ENCODE measurements at regions of chr19 and their contacts with region 1.

Region 1: GRCh38 chr19:49817964-49818648 is at the start of gene MED25:
- DNase-seq: peak in 1 of 2 donors; percentile 92
- H3K4me3 ChIP-seq: peak within 1 kb of the TSS; percentile 61 to 85
- H3K27ac ChIP-seq: peak within 1 kb of the TSS; percentile 87
- H3K4me1 ChIP-seq: peaks cover 28% of the 10 kb centered on the region
- H3K27me3 ChIP-seq: no peaks in the 10 kb centered on the region
- CTCF ChIP-seq: peak in 2 of 3 experiments; percentile 46 to 54
- POLR2A ChIP-seq: peak; percentile 9 to 51
- total RNA-seq, gene MED25: 25.0 TPM

Region 2: GRCh38 chr19:49862376-49863253 is 44.5 kb after region 1 on chr19:
- intact Hi-C with region 1: loop called (anchors 5 kb)
- DNase-seq: no peak
- H3K4me3 ChIP-seq: no peak overlapping the region
- H3K27ac ChIP-seq: no peak overlapping the region
- H3K4me1 ChIP-seq: peaks cover 32% of the 10 kb centered on the region
- H3K27me3 ChIP-seq: no peaks in the 10 kb centered on the region
- CTCF ChIP-seq: no peak
- POLR2A ChIP-seq: no peak

Region 3: GRCh38 chr19:49881672-49882394 is 63.7 kb after region 1 on chr19:
- intact Hi-C with region 1: no loop called
- DNase-seq: no peak
- H3K4me3 ChIP-seq: no peak overlapping the region
- H3K27ac ChIP-seq: no peak overlapping the region
- H3K4me1 ChIP-seq: peaks cover 13% of the 10 kb centered on the region
- H3K27me3 ChIP-seq: no peaks in the 10 kb centered on the region
- CTCF ChIP-seq: no peak
- POLR2A ChIP-seq: no peak

Measured in vagina (tissue), 2 donors.